Stomach (tissue), 19 donors: ENCODE measurements at regions of chr9 and their contacts with region 1.

Region 1: DNA sequence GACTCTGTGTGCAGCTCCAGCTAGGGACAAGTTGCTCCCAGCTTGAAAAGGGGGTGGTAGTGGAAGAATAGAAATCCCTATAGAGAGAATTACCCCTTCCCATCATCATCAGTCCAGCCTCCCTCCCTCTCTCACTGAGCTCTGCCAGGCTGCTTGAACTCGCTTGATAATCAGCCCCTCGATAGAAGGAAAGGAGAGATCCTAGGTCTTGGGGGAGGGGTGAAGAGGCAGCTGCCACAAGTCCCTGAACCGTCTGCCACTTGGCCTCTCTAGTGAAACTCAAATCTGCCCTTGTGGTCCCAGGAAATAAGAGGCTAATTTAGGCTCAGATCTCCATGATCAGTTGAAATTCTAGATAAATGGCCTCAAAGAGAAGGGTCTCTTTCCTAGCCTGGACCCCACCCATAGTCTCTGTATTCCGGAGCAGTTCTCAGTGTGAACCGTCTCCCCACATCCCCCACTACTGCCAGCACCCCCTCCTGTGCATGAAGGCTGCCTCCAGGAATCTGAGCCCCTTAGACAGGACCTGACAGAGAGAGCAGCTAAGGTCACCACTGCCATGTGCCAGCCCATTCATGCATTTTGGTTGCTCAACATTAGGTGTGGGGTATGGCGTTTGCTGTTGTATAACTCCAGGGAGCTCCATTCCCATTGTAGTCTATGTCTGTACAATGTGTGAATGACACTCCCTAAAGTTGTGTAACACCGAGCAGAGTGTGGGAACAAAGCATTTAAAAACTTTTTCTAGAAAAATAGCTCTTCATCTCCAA is 5.5 kb downstream of the DNAJB5 start:
- DNase-seq: no peak
- H3K4me3 ChIP-seq: no peak overlapping the region
- H3K27ac ChIP-seq: peak overlapping the region in 4 of 5 donors; percentile 90 to 99 (median 92)
- H3K4me1 ChIP-seq: peaks cover 35 to 70% (median 54%) of the 10 kb centered on the region in 4 donors
- H3K27me3 ChIP-seq: no peaks in the 10 kb centered on the region
- CTCF ChIP-seq: no peak
- EP300 ChIP-seq: peak; percentile 55
- POLR2A ChIP-seq: no peak

Region 2: GRCh38 chr9:34675048-34675714 is 319.9 kb before region 1 on chr9:
- intact Hi-C with region 1: no loop called
- DNase-seq: peak; percentile 64 to 88
- H3K4me3 ChIP-seq: no peak overlapping the region
- H3K27ac ChIP-seq: no peak overlapping the region
- H3K4me1 ChIP-seq: no peaks in the 10 kb centered on the region
- H3K27me3 ChIP-seq: no peaks in the 10 kb centered on the region
- CTCF ChIP-seq: peak in 5 of 7 experiments; percentile 29 to 66 (median 44)
- EP300 ChIP-seq: no peak
- POLR2A ChIP-seq: no peak

Region 3: GRCh38 chr9:34899535-34900158 is 95.4 kb before region 1 on chr9:
- intact Hi-C with region 1: loop called (anchors 5 kb)
- DNase-seq: peak; percentile 80 to 92
- H3K4me3 ChIP-seq: no peak overlapping the region
- H3K27ac ChIP-seq: no peak overlapping the region
- H3K4me1 ChIP-seq: no peaks in the 10 kb centered on the region
- H3K27me3 ChIP-seq: peaks cover 0 to 29% (median 14%) of the 10 kb centered on the region in 3 donors
- CTCF ChIP-seq: peak in 5 of 7 experiments; percentile 59 to 81 (median 74)
- EP300 ChIP-seq: no peak
- POLR2A ChIP-seq: no peak